Esophagus muscularis mucosa (tissue), 4 donors: ENCODE measurements at regions of chr6 and their contacts with region 1.

Region 1: DNA sequence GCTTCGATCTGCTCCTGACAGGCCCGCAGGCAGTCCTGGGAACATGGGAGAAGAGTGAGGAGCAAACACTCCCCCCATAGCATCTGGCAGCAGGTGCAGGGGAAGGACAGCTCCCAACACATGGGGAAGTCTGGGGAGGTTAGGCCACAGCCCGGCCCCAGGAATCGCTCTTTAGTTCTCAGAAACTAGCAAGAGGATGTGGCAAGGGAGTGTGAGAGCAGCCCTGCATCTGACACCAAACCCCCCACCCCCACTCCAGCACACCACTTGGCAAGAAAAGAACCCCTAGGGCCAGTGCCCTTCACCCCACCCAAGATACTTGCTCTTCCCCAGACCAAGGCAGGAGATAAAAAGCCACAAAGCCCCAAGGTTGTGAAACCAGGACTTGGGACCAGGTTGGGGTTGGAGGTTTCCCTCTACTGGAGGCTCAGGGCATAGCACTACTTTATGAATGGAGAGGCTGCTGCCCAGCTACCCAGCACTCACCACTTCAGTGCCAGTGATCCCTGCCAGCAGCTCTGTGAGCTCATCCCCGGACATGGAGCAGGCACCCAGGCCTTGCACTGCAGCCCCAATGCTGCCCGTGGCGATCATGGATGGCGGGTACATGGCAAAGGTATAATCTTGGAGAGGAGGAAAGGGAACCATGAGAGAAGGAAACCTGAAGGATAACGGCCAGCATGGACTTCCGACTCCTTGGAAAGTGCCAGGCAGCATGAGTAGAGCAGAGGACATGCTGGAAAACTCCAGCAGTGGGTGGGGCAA is 5.4 kb downstream of the CCND3 start:
- DNase-seq: no peak
- H3K4me3 ChIP-seq: no peak overlapping the region
- H3K27ac ChIP-seq: peak overlapping the region in 3 of 4 donors; percentile 9 to 96 (median 21)
- H3K4me1 ChIP-seq: peaks cover 50 to 55% (median 53%) of the 10 kb centered on the region in 4 donors
- H3K27me3 ChIP-seq: no peaks in the 10 kb centered on the region
- CTCF ChIP-seq: peak; percentile 71 to 90 (median 73)
- EP300 ChIP-seq: no peak
- POLR2A ChIP-seq: no peak

Region 2: DNA sequence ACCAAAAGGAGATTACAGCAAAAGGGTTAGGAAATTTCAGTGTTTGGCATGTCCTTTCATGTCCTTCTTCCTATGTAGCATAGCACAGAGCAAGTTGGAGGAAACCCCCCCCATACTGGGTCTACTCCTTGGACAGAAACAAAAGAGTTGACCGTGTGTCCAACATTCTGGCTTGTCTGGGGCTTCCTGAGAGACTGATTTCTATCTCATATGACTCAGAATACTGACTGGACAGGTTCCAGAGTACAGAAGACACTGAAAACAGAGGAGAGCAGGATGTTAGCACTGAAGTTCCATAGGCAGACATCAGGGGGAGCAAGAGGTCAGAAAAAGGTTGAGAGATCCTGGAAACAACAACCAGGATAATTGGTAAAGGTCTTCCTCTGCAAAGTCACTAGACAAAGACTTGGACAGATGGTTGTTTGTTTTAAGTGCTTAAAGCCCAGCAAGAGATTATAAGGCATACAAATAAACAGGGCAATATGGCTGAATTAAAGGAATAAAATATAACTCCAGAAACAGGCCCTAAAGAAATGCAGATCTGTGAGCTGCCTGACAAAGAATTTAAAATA is 89.5 kb before region 1 on chr6:
- intact Hi-C with region 1: loop called (anchors 10 kb)
- DNase-seq: no peak
- H3K4me3 ChIP-seq: no peak overlapping the region
- H3K27ac ChIP-seq: peak overlapping the region in 3 of 4 donors; percentile 26 to 63 (median 45)
- H3K4me1 ChIP-seq: peaks cover 7 to 11% (median 11%) of the 10 kb centered on the region in 4 donors
- H3K27me3 ChIP-seq: no peaks in the 10 kb centered on the region
- CTCF ChIP-seq: peak; percentile 78 to 86 (median 84)
- EP300 ChIP-seq: no peak
- POLR2A ChIP-seq: no peak

Region 3: DNA sequence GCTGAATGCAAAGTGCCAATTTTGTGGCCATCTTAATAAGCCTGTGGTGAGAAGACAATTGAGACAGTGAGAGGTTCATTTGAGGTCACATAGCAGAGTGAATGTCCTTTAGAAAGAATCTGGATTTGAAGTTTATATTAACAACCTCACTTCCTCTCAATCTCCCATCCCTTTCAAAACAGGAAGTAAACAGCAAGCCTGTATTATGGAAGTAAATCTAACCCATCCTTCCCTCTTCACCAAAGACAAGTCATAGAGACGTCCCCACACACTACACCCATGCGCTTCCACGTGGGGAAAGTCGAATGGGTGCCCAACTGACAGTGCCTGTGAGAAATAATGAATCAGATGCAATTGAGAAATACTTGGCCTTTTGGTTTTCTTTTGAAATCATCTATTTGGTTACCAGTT is 34.2 kb after region 1 on chr6:
- intact Hi-C with region 1: no loop called
- DNase-seq: no peak
- H3K4me3 ChIP-seq: no peak overlapping the region
- H3K27ac ChIP-seq: no peak overlapping the region
- H3K4me1 ChIP-seq: peaks cover 11 to 15% (median 14%) of the 10 kb centered on the region in 4 donors
- H3K27me3 ChIP-seq: no peaks in the 10 kb centered on the region
- CTCF ChIP-seq: no peak
- EP300 ChIP-seq: no peak
- POLR2A ChIP-seq: no peak